PC-9 (cell line): ENCODE measurements at regions of chr7 and their contacts with region 1.

Region 1: DNA sequence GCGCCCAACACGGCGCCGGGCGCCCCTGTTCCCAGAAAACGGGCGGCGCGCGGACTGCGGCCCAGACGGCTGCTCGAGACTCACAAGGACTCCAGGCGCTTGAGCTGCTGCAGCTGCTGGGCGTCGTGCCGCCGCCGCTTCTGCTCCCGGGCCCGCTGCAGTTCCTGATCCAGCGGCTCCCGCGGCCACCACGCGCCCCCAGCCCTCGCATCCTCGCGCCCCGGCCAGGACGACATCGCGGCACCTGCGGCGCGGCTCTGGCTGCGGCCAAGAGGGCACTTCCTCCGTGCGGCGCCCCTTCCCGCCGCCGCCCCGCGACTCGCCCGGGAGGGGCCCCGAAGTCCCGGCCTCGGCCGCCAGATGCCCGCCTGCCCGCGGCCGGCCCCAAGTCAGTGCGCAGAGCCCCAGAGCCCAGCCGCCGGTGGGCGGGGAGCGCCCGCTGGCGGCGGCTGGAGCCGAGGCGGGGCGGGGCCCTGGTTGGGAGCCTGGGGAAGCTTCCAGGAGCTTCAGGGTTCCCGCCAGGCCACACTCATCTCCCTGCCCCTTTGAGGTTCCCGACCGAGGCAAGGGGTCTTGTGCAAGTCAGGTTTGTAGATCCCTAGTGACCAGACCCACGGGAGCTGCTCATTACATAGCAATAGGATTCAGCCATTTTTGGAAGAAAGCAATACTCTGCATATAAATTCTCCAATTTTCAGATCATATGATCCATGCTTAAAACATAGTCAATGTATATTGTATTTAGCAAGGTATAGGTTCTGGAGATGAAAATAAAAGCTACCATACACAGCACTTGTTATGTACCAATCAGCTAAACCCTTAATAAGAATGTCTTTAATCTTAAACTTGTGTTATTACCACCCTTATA is 14.2 kb upstream of the FKBP9 start:
- DNase-seq: peak; percentile 71 to 87
- H3K4me3 ChIP-seq: peak overlapping the region; percentile 78
- H3K27ac ChIP-seq: peak overlapping the region; percentile 16; the same call in 1 of the 2 replicates
- H3K4me1 ChIP-seq: peaks cover 10% of the 10 kb centered on the region
- H3K27me3 ChIP-seq: no peaks in the 10 kb centered on the region
- CTCF ChIP-seq: peak; percentile 52; the same call in 1 of the 2 replicates

Region 2: DNA sequence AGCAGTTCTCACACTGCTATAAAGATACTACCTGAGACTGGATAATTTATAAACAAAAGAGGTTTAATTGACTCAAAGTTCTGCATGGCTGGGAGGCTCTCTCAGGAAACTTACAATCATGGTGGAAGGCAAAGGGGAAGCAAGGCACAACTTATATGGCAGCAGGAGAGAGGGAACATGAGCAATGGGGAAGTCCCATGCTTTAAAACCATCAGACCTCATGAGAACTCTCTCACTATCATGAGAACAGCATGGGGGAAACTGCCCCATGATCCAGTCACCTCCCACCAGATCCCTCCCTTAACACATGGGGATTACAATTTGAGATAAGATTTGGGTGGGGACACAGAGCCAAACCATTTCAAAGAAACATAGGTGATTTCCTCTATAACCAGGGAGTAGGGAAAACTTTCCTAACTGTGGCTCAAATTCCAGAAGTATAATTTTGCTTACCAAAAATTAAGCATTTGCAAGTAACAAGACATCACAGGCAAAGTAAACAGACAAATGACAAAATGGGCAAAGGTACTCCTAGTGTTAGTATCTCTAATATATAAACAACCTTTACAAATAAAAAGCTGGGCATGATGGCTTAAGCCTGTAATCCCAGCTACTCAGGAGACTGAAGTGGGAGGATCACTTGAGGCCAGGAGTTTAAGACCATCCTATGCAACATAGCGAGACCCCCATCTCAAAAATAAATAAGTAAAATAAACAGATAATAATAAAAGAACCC is 139.4 kb before region 1 on chr7:
- CTCF ChIA-PET with region 1: no interaction called
- POLR2A ChIA-PET with region 1: no interaction called
- intact Hi-C with region 1: loop called (anchors 1 kb)
- DNase-seq: no peak
- H3K4me3 ChIP-seq: no peak overlapping the region
- H3K27ac ChIP-seq: no peak overlapping the region
- H3K4me1 ChIP-seq: no peaks in the 10 kb centered on the region
- H3K27me3 ChIP-seq: no peaks in the 10 kb centered on the region
- CTCF ChIP-seq: no peak

Region 3: GRCh38 chr7:32891800-32892520 is 51.1 kb before region 1 on chr7:
- CTCF ChIA-PET with region 1: no interaction called
- POLR2A ChIA-PET with region 1: interaction called, 16 read pairs
- intact Hi-C with region 1: loop called (anchors 1 kb)
- DNase-seq: peak; percentile 91 to 98
- H3K4me3 ChIP-seq: peak overlapping the region; percentile 86
- H3K27ac ChIP-seq: peak overlapping the region; percentile 87
- H3K4me1 ChIP-seq: peaks cover 35% of the 10 kb centered on the region
- H3K27me3 ChIP-seq: no peaks in the 10 kb centered on the region
- CTCF ChIP-seq: no peak

Region 4: GRCh38 chr7:32957326-32958045 is 14.5 kb after region 1 on chr7 and contains the start of gene FKBP9:
- CTCF ChIA-PET with region 1: interaction called, 12 read pairs
- POLR2A ChIA-PET with region 1: interaction called, 9 read pairs
- intact Hi-C with region 1: loop called (anchors 2 kb)
- DNase-seq: peak; percentile 77 to 97
- H3K4me3 ChIP-seq: peak within 1 kb of the TSS; percentile 85
- H3K27ac ChIP-seq: peak within 1 kb of the TSS; percentile 28
- H3K4me1 ChIP-seq: peaks cover 13% of the 10 kb centered on the region
- H3K27me3 ChIP-seq: no peaks in the 10 kb centered on the region
- CTCF ChIP-seq: no peak
- total RNA-seq, gene FKBP9: 155 and 160 TPM in 2 replicates

Region 5: GRCh38 chr7:33062782-33063443 is 119.9 kb after region 1 on chr7:
- CTCF ChIA-PET with region 1: no interaction called
- POLR2A ChIA-PET with region 1: no interaction called
- intact Hi-C with region 1: loop called (anchors 5 kb)
- DNase-seq: peak; percentile 91 to 95
- H3K4me3 ChIP-seq: peak overlapping the region; percentile 80
- H3K27ac ChIP-seq: no peak overlapping the region
- H3K4me1 ChIP-seq: peaks cover 21% of the 10 kb centered on the region
- H3K27me3 ChIP-seq: no peaks in the 10 kb centered on the region
- CTCF ChIP-seq: no peak